ENCODE measurements at regions of chr2 and their contacts with region 1.

Region 1: GRCh38 chr2:18520451-18521425 is 39.7 kb downstream of the RDH14 start:
- DNase-seq: peak; percentile 77
- H3K4me3 Mint-ChIP-seq: no peak overlapping the region
- H3K27ac Mint-ChIP-seq: no peak overlapping the region
- H3K4me1 Mint-ChIP-seq: no peaks in the 10 kb centered on the region
- H3K27me3 Mint-ChIP-seq: peaks cover 21% of the 10 kb centered on the region

Region 2: DNA sequence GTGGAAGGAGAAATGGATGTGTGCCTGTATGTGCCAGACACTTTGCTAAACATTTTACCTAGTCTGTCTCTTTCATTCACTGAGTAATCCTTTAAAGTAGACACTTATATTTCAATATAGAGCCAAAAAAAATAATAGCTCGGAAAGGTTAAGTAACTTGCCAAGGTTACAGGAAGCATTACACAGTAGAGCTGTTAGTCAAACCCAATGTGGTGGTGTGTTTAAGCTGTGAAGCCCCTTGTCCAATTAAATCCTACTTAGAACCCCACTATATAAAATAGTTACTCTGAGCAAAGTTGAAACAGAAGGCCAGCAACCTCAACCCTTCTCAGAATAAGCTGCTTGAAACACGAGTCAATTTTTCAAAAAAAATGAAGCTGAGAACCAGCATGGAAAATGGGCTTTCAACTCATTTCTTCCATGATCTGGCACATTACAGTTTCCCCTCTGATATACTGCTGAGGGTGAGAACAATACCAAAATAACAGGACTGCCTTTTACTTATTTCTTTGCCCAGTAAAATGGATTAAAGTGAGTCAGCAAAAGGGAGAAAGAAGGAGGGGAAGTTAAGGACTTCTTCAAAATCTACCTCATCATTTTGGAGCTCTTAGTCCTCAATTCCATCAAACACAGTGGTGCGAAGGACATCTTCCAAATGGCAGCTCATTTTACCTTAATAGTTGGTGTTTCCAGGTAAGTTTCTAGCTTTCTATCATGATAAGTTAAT is 31.8 kb after region 1 on chr2:
- CTCF ChIA-PET with region 1: interaction called, 12 read pairs
- POLR2A ChIA-PET with region 1: no interaction called
- intact Hi-C with region 1: no loop called
- DNase-seq: no peak
- H3K4me3 Mint-ChIP-seq: no peak overlapping the region
- H3K27ac Mint-ChIP-seq: peak overlapping the region; percentile 8
- H3K4me1 Mint-ChIP-seq: peaks cover 45% of the 10 kb centered on the region
- H3K27me3 Mint-ChIP-seq: no peaks in the 10 kb centered on the region

Region 3: DNA sequence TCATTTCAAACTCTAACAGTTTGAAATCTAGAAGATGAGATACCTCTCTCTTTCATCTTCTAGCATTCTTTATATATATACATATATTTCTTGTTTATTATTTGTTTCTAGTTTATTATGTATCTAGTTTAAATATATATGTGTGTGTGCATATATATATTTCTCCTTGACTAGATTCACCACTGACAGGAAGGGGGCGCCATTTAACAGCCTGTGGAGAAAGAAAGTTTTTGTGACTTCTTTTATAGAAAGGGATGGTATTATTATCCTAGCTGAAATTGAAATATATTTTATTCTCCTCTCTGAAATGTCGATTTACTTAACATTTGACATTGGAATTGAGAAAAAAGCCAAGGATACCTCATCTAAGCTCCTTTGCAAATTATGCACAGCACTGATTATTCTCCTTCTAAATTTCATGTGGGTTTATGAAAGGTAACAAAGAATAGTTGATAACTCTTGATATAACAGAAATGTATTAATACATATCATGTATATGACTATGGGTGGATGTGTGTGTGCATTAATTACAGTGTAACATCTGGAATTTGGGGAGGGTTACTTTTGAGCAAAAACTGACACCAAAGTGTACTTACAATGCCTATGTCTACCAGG is 229.3 kb after region 1 on chr2:
- CTCF ChIA-PET with region 1: interaction called, 5 read pairs
- POLR2A ChIA-PET with region 1: no interaction called
- intact Hi-C with region 1: loop called (anchors 2 kb)
- DNase-seq: peak; percentile 44
- H3K4me3 Mint-ChIP-seq: no peak overlapping the region
- H3K27ac Mint-ChIP-seq: no peak overlapping the region
- H3K4me1 Mint-ChIP-seq: no peaks in the 10 kb centered on the region
- H3K27me3 Mint-ChIP-seq: no peaks in the 10 kb centered on the region

Region 4: GRCh38 chr2:19863303-19864041 is 1342.7 kb after region 1 on chr2:
- CTCF ChIA-PET with region 1: interaction called, 24 read pairs
- POLR2A ChIA-PET with region 1: no interaction called
- intact Hi-C with region 1: loop called (anchors 1 kb)
- DNase-seq: peak; percentile 76
- H3K4me3 Mint-ChIP-seq: no peak overlapping the region
- H3K27ac Mint-ChIP-seq: no peak overlapping the region
- H3K4me1 Mint-ChIP-seq: peaks cover 5% of the 10 kb centered on the region
- H3K27me3 Mint-ChIP-seq: peaks cover 1% of the 10 kb centered on the region

Measured in activated CD4-positive, alpha-beta memory T cell treated with anti-CD3 and anti-CD28 coated beads for 36 hours (primary cell).